Activated T-helper 1 cell treated with anti-CD3 and anti-CD28 coated beads, Interleukin-12 subunit alpha, Interleukin-12 subunit beta, Interleukin-2, Interleukin-4 antibody, amounts not matched to agents 30 ng/mL and 10 ng/mL and 1 ng/mL, durations not matched to agents 14 hours and 24 hours and 36 hours (primary cell): ENCODE measurements at regions of chr5 and their contacts with region 1.

Region 1: DNA sequence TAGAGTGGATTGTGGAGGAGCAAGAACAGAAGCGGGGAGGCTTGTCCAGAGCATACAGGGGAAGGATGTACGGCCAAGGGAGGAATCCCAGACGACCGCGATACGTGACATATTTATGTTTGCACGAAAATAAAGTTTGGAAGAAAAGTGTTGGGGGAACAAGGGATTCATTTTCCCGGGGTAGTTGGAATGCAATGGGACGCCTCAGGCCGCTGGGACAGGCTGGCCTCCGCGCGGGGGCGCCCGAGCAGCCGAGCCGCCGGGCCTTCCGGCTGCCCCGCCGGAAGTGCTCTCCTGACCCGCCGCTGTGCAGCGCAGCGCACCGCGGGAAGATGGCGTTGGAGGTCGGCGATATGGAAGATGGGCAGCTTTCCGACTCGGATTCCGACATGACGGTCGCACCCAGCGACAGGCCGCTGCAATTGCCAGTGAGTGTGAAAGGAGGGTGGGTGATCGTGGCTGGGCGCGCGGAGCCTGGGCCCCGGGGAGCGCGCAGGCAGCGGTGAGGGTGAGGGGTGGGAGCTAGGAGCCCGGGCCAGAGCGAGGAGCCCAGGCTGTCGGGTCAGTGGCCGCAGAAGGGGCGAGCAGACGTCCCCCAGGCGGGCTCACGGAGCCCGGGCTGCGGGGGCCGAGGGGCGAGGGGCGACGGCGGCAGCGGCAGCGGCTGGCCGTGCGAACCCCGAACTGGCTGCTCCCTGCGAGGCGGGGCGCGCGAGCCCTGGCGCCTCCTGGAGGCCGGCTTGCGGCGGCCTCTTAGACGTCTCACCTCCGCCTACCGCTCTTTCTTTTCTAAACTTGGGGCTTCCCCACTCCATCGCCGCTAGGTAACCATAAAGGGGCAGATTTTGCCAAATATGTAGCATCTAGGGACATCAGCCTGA is at the start of gene PHAX:
- DNase-seq: peak; percentile 72
- H3K4me3 Mint-ChIP-seq: peak within 1 kb of the TSS; percentile 95
- H3K27ac Mint-ChIP-seq: peak within 1 kb of the TSS; percentile 97
- H3K4me1 Mint-ChIP-seq: peaks cover 33% of the 10 kb centered on the region
- H3K27me3 Mint-ChIP-seq: peaks cover 10% of the 10 kb centered on the region
- total RNA-seq, gene PHAX: 46.6 and 52.9 TPM in 2 replicates

Region 2: GRCh38 chr5:126422989-126423788 is 177.7 kb before region 1 on chr5 and contains the start of gene GRAMD2B:
- intact Hi-C with region 1: loop called (anchors 2 kb)
- DNase-seq: peak; percentile 53
- H3K4me3 Mint-ChIP-seq: peak within 1 kb of the TSS; percentile 86
- H3K27ac Mint-ChIP-seq: peak within 1 kb of the TSS; percentile 81
- H3K4me1 Mint-ChIP-seq: peaks cover 40% of the 10 kb centered on the region
- H3K27me3 Mint-ChIP-seq: no peaks in the 10 kb centered on the region
- total RNA-seq, gene GRAMD2B: 8.3 and 9.5 TPM in 2 replicates

Region 3: DNA sequence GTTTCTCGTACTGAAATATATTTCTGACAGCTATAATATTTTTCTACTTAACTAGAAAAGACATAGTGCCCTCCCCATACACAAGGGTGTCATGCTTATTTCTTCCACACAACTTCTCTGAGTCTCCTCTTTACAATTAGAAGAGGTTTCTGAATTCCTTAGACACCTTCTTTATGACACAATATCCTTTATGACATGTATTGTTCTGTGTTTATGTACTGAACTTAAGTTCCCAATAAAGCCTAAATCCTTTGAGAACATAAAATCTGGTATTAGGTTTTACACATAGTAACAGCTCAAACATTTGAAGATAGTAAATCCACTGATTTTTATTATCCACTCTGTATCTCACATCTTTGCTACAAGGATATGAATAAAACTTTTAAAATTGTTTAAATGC is 145.1 kb before region 1 on chr5:
- intact Hi-C with region 1: no loop called
- DNase-seq: no peak
- H3K4me3 Mint-ChIP-seq: no peak overlapping the region
- H3K27ac Mint-ChIP-seq: no peak overlapping the region
- H3K4me1 Mint-ChIP-seq: peaks cover 18% of the 10 kb centered on the region
- H3K27me3 Mint-ChIP-seq: no peaks in the 10 kb centered on the region

Region 4: GRCh38 chr5:126576974-126577373 is 23.9 kb before region 1 on chr5:
- intact Hi-C with region 1: no loop called
- DNase-seq: no peak
- H3K4me3 Mint-ChIP-seq: no peak overlapping the region
- H3K27ac Mint-ChIP-seq: no peak overlapping the region
- H3K4me1 Mint-ChIP-seq: no peaks in the 10 kb centered on the region
- H3K27me3 Mint-ChIP-seq: peaks cover 7% of the 10 kb centered on the region

Region 5: DNA sequence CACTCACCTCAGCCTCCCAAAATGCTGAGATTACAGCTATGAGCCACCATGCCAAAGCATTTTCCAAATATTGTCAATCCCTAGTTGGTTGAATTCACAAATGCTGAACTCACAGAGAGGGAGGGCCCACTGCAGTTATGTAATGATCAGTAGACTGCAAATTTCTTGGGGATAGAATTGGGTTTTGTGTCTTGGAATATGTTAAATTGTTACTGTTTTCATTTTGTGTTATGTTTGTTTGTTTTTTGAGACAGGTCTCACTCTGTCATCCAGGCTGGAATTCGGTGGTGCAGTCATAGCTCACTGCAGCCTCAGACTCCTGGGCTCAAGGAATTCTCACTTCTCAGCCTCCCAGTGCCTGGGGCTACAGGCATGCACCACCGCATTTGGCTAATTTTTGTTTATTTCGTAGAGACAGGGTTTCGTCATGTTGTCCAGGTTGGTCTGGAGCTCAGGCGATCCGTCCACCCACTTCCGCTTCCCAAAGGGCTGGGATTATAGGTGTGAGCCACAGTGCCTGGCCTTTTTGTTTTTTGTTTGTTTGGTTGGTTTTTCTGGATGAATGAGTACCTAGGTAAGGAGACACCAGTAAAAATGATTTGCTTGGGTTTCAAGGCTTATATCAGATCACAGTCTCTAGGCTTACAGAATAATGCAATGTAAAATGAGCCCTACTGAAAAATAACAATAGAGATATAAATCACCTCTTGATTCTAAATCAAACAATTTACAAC is 144.6 kb after region 1 on chr5:
- intact Hi-C with region 1: loop called (anchors 1 kb)
- DNase-seq: no peak
- H3K4me3 Mint-ChIP-seq: no peak overlapping the region
- H3K27ac Mint-ChIP-seq: peak overlapping the region; percentile 40
- H3K4me1 Mint-ChIP-seq: peaks cover 60% of the 10 kb centered on the region
- H3K27me3 Mint-ChIP-seq: peaks cover 1% of the 10 kb centered on the region

Region 6: GRCh38 chr5:126988021-126988569 is 387.2 kb after region 1 on chr5:
- intact Hi-C with region 1: loop called (anchors 2 kb)
- DNase-seq: peak; percentile 31
- H3K4me3 Mint-ChIP-seq: peak overlapping the region; percentile 28
- H3K27ac Mint-ChIP-seq: peak overlapping the region; percentile 86
- H3K4me1 Mint-ChIP-seq: peaks cover 28% of the 10 kb centered on the region
- H3K27me3 Mint-ChIP-seq: no peaks in the 10 kb centered on the region

Region 7: GRCh38 chr5:127517480-127518318 is 916.8 kb after region 1 on chr5 and contains the start of gene PRRC1:
- intact Hi-C with region 1: loop called (anchors 2 kb)
- DNase-seq: peak; percentile 73
- H3K4me3 Mint-ChIP-seq: peak within 1 kb of the TSS; percentile 84
- H3K27ac Mint-ChIP-seq: peak within 1 kb of the TSS; percentile 59
- H3K4me1 Mint-ChIP-seq: peaks cover 26% of the 10 kb centered on the region
- H3K27me3 Mint-ChIP-seq: peaks cover 7% of the 10 kb centered on the region
- total RNA-seq, gene PRRC1: 52.9 and 59.7 TPM in 2 replicates